GM10248 (cell line): ENCODE measurements at regions of chr11 and their contacts with region 1.

Region 1: DNA sequence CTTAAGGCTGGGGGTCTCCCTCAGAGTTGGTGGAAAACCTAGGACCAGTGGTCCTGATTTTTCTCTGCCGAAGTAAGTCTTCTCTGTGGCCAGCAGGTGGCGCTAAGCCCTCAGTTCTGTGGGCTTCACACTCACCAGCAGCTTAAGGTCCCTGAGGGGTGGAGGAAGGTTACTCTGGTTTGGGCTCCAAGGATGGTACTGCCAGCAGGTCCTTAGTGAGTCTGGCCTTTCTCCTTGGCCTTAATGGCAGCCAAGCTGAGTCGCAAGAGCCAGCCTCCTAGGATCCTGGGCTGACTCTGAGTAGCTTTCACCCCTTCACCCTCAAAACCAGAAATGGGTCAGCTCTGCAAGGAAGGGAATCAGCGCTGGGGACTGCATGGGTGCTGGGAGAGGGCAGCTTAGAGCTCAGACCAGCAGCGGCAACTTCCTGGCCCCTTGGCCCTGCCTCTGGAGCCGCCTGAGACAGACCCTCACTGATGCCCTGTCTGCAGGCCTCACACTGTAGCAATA is 4.4 kb downstream of the KCNJ11 start:
- DNase-seq: peak; percentile 60
- CTCF ChIP-seq: peak; percentile 92

Region 2: DNA sequence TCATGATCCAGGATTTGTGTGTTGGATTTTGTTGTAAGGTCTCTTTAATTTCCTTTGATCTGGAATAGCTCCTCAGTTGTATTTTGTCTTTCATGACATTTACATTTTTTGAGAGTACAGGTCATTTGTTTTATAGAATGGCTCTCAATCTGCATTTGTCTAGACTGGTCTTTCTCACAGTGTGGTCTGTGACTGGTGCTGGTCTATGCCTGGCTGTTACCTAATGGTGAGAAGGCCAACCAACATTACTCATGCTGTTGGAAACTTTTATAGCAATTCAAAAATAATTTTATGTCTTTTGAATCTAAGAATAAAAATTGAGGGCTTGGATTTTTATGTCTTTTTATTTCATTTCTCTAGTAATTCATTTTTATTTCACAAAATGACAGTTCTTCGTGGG is 36.4 kb before region 1 on chr11:
- CTCF ChIA-PET with region 1: interaction called, 13 read pairs
- POLR2A ChIA-PET with region 1: no interaction called
- DNase-seq: no peak
- CTCF ChIP-seq: no peak

Region 3: DNA sequence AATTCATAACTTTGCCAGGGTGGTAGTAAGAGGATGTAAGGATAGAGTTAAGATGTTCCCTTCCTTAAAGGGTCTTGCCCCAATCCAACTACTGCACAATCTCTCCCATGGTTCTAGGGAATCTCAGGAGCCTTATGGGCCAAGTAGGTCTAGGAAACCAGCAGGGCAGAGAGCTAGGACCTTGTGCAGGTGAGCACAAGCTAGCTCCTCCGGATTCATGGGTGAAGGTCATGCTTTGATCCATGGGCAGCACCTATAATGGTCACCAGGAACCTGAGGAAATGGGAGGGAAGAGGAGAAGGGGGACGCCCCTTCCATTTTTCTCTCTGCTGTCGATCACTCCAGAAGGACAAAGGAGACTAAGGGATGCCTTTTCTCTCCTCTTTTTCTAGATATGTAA is 12.4 kb before region 1 on chr11:
- CTCF ChIA-PET with region 1: interaction called, 23 read pairs
- POLR2A ChIA-PET with region 1: no interaction called
- DNase-seq: no peak
- CTCF ChIP-seq: no peak

Region 4: GRCh38 chr11:17443926-17444690 is 60.1 kb after region 1 on chr11:
- CTCF ChIA-PET with region 1: no interaction called
- POLR2A ChIA-PET with region 1: no interaction called
- DNase-seq: no peak
- CTCF ChIP-seq: no peak

Region 5: DNA sequence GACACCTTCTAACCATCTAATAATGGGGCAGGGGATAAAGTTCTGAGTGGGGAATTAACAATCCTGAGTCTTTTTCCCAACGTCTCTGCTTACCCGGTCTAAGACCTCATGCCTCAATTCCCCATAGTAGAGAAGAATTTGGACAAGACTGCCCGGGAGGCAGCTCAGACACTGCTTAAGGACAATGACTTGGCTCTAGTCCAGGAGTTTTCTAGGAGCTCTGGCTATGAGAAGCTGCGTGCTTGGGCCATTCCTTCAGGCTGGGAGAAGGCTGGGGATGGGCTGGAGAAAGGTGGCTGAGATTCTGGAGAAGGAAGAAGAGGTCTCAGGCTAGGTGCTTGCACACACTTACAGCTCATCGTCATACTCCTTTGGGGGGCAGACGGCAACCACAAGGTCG is 112.3 kb after region 1 on chr11:
- CTCF ChIA-PET with region 1: interaction called, 110 read pairs
- POLR2A ChIA-PET with region 1: no interaction called
- DNase-seq: no peak
- CTCF ChIP-seq: no peak

Region 6: DNA sequence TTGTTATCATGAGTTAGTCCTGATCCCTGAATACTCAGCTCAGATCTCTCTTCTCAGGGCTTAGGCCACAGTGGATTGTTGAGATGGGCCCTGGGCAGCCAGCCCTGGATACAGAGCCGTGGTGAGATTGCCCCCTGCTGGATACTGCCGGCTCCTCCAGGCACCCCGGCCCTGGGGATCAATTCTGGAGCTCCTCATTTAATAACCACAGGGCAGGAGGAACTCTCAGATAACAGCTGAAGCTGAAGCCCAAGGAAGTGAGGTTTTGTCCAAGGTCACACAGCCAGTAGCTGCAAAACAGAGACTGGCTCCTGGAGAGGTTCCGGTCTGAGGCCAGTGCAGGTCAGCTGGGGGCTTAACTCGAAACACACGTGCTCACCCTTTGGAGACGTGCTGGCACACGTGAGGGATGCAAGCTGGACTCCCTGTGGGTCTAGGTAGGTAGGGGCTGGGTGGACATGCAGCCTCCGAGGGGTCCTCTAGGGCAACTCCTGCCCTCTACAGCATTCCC is 144.2 kb after region 1 on chr11:
- CTCF ChIA-PET with region 1: interaction called, 220 read pairs
- POLR2A ChIA-PET with region 1: no interaction called
- DNase-seq: peak; percentile 78
- CTCF ChIP-seq: peak; percentile 58